Posterior cingulate gyrus (tissue), 11 donors: ENCODE measurements at regions of chr5 and their contacts with region 1.

Region 1: GRCh38 chr5:61620699-61621187 is 288.7 kb downstream of the ZSWIM6 start:
- DNase-seq: peak in 1 of 10 donors; percentile 57

Region 2: GRCh38 chr5:61408476-61409168 is 212.1 kb before region 1 on chr5:
- intact Hi-C with region 1: loop called (anchors 10 kb)
- DNase-seq: peak; percentile 93 to 99 (median 98)

Region 3: GRCh38 chr5:61609840-61610677 is 10.7 kb before region 1 on chr5:
- intact Hi-C with region 1: loop called (anchors 1 kb)
- DNase-seq: no peak